Calu3 (cell line): ENCODE measurements at regions of chr3 and their contacts with region 1.

Region 1: GRCh38 chr3:141605883-141606282 is 119.1 kb downstream of the RASA2 start:
- DNase-seq: no peak
- H3K4me3 Mint-ChIP-seq: no peak overlapping the region
- H3K27ac Mint-ChIP-seq: peak overlapping the region; percentile 31
- H3K4me1 Mint-ChIP-seq: no peaks in the 10 kb centered on the region
- H3K27me3 Mint-ChIP-seq: no peaks in the 10 kb centered on the region
- CTCF ChIP-seq: no peak

Region 2: GRCh38 chr3:141523615-141524375 is 82.1 kb before region 1 on chr3:
- CTCF ChIA-PET with region 1: no interaction called
- intact Hi-C with region 1: no loop called
- DNase-seq: no peak
- H3K4me3 Mint-ChIP-seq: no peak overlapping the region
- H3K27ac Mint-ChIP-seq: no peak overlapping the region
- H3K4me1 Mint-ChIP-seq: peaks cover 26% of the 10 kb centered on the region
- H3K27me3 Mint-ChIP-seq: no peaks in the 10 kb centered on the region
- CTCF ChIP-seq: no peak

Region 3: GRCh38 chr3:141625506-141625905 is 19.6 kb after region 1 on chr3:
- CTCF ChIA-PET with region 1: no interaction called
- intact Hi-C with region 1: no loop called
- DNase-seq: no peak
- H3K4me3 Mint-ChIP-seq: no peak overlapping the region
- H3K27ac Mint-ChIP-seq: no peak overlapping the region
- H3K4me1 Mint-ChIP-seq: no peaks in the 10 kb centered on the region
- H3K27me3 Mint-ChIP-seq: no peaks in the 10 kb centered on the region
- CTCF ChIP-seq: no peak

Region 4: GRCh38 chr3:141998669-141999290 is 392.9 kb after region 1 on chr3:
- CTCF ChIA-PET with region 1: no interaction called
- intact Hi-C with region 1: no loop called
- DNase-seq: no peak
- H3K4me3 Mint-ChIP-seq: no peak overlapping the region
- H3K27ac Mint-ChIP-seq: no peak overlapping the region
- H3K4me1 Mint-ChIP-seq: no peaks in the 10 kb centered on the region
- H3K27me3 Mint-ChIP-seq: no peaks in the 10 kb centered on the region
- CTCF ChIP-seq: peak; percentile 36

Region 5: DNA sequence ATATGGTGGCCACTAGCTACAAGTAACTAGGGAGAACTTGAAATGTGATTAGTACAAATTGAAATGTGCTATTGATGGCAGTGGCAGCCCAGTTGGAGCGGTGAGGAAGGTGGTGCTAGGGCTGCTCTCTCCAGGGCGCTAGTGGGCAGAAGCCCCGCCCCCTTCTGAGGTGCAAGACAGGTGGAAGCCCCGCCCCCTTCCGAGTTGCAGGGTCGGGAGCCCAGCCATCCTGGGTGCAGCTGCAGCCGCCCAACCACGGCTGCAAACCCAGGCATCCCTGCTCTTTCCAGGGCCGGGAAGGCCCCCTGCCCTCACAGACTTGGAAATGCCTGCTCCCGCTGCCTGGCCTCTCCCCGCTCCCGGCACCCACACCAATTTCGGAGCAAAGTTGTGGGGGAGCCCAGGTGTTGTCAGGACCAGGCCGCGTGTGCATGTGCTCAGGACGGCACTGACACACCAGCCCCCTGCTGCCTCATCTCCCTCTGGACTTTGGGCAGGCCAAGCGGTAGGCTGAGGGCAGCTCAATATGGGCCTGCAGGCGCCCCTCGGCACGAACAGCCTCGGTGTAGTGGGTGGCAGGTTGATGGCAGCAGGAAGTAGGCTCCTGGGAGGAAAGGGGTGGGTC is 962.6 kb after region 1 on chr3:
- CTCF ChIA-PET with region 1: no interaction called
- intact Hi-C with region 1: loop called (anchors 10 kb)
- DNase-seq: no peak
- H3K4me3 Mint-ChIP-seq: no peak overlapping the region
- H3K27ac Mint-ChIP-seq: no peak overlapping the region
- H3K4me1 Mint-ChIP-seq: peaks cover 24% of the 10 kb centered on the region
- H3K27me3 Mint-ChIP-seq: no peaks in the 10 kb centered on the region
- CTCF ChIP-seq: no peak